ENCODE measurements at regions of chr2 and their contacts with region 1.

Region 1: GRCh38 chr2:220959391-220959802 is 612.7 kb downstream of the EPHA4 start:
- DNase-seq: peak; percentile 51
- ATAC-seq: peak; percentile 77 to 86

Region 2: DNA sequence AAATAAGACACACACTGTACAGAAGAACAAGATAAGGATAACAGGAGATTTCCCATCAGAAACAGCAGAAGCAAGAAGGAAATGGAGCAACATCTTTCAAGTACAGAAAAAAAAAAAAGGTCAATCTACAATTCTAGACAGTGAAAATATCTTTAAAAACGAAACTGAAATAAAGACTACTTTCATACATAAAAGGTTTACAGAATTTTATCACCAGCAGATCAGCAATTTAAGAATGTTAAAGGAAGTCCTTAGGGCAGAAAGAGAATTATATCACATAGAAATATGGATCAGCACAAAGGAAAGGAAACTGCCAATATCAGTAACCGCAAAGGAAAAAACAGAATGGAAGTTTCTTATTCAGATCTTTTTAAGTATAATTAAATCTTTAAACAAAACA is 318.3 kb before region 1 on chr2:
- intact Hi-C with region 1: no loop called
- DNase-seq: no peak
- ATAC-seq: no peak

Region 3: GRCh38 chr2:221085341-221085900 is 126.0 kb after region 1 on chr2:
- intact Hi-C with region 1: loop called in 1 of 2 experiments (anchors 5 kb)
- DNase-seq: no peak
- ATAC-seq: no peak